Activated T-helper 1 cell treated with anti-CD3 and anti-CD28 coated beads, Interleukin-12 subunit alpha, Interleukin-12 subunit beta, Interleukin-2, Interleukin-4 antibody, amounts not matched to agents 30 ng/mL and 10 ng/mL and 1 ng/mL, durations not matched to agents 14 hours and 24 hours and 36 hours (primary cell): ENCODE measurements at regions of chr4 and their contacts with region 1.

Region 1: GRCh38 chr4:121711263-121712000 is 14.7 kb upstream of the ANXA5 start:
- DNase-seq: peak; percentile 10
- H3K4me3 Mint-ChIP-seq: peak overlapping the region; percentile 45
- H3K27ac Mint-ChIP-seq: no peak overlapping the region
- H3K4me1 Mint-ChIP-seq: peaks cover 51% of the 10 kb centered on the region
- H3K27me3 Mint-ChIP-seq: peaks cover 24% of the 10 kb centered on the region

Region 2: GRCh38 chr4:120452001-120452400 is 1259.4 kb before region 1 on chr4:
- intact Hi-C with region 1: no loop called
- DNase-seq: no peak
- H3K4me3 Mint-ChIP-seq: no peak overlapping the region
- H3K27ac Mint-ChIP-seq: no peak overlapping the region
- H3K4me1 Mint-ChIP-seq: no peaks in the 10 kb centered on the region
- H3K27me3 Mint-ChIP-seq: no peaks in the 10 kb centered on the region

Region 3: DNA sequence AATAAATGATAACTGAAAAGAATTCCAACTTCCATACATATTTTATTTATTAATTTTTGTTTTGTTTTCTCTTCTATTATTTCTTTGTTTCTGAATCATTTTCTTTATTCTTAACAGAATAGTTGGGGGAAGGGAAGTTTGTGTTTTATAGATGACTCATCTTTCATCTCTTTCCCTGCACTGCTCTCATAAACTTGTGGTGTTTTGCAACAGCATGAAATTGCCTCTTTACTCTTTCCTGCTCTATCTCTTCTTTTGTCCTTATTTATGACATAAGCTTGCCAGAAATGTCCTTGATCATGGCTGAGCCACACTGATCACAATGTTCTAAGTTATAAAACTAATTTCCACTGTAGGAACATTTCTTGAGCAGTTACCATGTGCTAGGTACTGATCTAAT is 353.0 kb before region 1 on chr4:
- intact Hi-C with region 1: no loop called
- DNase-seq: no peak
- H3K4me3 Mint-ChIP-seq: no peak overlapping the region
- H3K27ac Mint-ChIP-seq: no peak overlapping the region
- H3K4me1 Mint-ChIP-seq: no peaks in the 10 kb centered on the region
- H3K27me3 Mint-ChIP-seq: peaks cover 13% of the 10 kb centered on the region

Region 4: GRCh38 chr4:121510341-121510874 is 201.0 kb before region 1 on chr4:
- intact Hi-C with region 1: loop called (anchors 5 kb)
- DNase-seq: no peak
- H3K4me3 Mint-ChIP-seq: no peak overlapping the region
- H3K27ac Mint-ChIP-seq: no peak overlapping the region
- H3K4me1 Mint-ChIP-seq: peaks cover 14% of the 10 kb centered on the region
- H3K27me3 Mint-ChIP-seq: peaks cover 13% of the 10 kb centered on the region

Region 5: DNA sequence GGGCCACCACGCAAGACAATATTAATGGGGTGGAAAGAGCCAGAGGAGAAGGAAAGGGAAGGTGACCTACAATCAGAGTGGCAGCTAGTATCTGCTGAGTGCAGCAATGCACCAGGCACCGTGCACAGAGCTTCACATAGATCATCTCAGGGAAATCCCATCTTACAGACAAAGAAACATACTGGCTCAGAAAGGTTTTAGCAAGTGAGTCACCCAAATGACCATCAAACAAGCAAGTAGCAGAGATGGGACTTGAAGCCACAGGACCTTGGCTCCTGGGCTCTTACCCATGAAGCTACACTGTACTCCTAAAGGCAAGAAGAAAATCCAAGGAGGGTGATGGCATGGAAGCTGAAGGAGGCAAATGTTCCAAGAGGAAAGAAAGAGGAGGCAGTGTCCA is 21.4 kb before region 1 on chr4:
- intact Hi-C with region 1: no loop called
- DNase-seq: no peak
- H3K4me3 Mint-ChIP-seq: no peak overlapping the region
- H3K27ac Mint-ChIP-seq: no peak overlapping the region
- H3K4me1 Mint-ChIP-seq: peaks cover 32% of the 10 kb centered on the region
- H3K27me3 Mint-ChIP-seq: no peaks in the 10 kb centered on the region

Region 6: GRCh38 chr4:122300776-122301175 is 589.3 kb after region 1 on chr4:
- intact Hi-C with region 1: no loop called
- DNase-seq: no peak
- H3K4me3 Mint-ChIP-seq: no peak overlapping the region
- H3K27ac Mint-ChIP-seq: no peak overlapping the region
- H3K4me1 Mint-ChIP-seq: no peaks in the 10 kb centered on the region
- H3K27me3 Mint-ChIP-seq: no peaks in the 10 kb centered on the region